Aorta (tissue), 5 donors: ENCODE measurements at regions of chr7 and their contacts with region 1.

Region 1: DNA sequence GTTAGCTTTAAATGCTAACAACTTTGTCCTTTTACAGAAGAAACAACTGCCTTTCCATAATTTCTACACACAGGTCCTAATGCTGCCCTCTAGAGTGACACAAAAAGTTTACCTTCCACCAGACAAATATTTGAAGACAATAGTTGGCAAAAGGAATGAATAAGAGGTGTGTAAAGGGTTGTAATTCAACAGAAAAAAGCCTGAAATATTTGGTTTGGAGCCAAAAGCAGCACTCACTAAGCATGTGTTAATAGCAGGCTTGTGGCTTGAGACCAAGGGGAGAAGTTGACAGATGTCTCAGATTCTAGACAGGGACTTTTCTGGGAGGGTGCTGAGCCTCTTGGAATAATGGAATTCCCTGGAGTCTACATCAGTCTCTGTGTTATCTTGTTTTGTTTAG is 156.2 kb upstream of the GALNT17 start:
- DNase-seq: no peak
- ATAC-seq: no peak
- H3K4me3 ChIP-seq: no peak overlapping the region
- H3K27ac ChIP-seq: no peak overlapping the region
- H3K4me1 ChIP-seq: no peaks in the 10 kb centered on the region
- H3K27me3 ChIP-seq: no peaks in the 10 kb centered on the region

Region 2: DNA sequence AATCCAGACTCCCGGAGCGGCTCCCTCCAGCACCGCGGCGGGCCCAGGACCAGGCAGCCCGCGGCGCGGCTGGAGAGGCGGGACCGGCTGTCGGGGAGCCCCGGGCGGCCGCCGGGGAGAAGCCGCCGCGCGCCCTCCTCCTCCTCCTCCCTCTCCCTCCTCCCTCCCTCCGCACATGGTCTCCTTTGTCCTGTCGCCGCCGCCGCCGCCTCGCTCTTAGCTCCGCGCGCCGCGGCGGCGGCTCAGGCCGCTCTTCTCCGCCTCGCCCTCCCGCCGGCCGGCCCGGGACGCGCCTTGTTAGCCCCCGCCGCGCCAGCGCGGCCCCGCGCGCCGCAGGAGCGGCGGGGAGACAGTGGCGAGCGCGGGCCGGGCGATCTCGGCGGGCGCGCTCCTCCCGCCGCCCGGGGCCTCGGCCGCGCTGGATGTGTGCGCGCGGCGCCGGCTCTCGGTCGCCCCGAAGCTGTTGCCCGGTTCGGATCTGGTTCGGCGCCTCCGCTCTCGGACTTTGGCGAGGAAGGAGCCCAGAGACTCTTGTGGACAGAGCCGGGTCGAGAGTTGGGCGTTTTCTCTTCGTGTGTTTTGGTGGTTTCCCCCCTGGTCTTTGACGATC is 281.3 kb before region 1 on chr7:
- intact Hi-C with region 1: no loop called
- DNase-seq: peak in 1 of 2 donors; percentile 55
- ATAC-seq: peak; percentile 2
- H3K4me3 ChIP-seq: peak overlapping the region; percentile 97 to 98
- H3K27ac ChIP-seq: peak overlapping the region; percentile 65 to 83
- H3K4me1 ChIP-seq: no peaks in the 10 kb centered on the region
- H3K27me3 ChIP-seq: no peaks in the 10 kb centered on the region

Region 3: GRCh38 chr7:70763961-70764691 is 211.6 kb before region 1 on chr7:
- intact Hi-C with region 1: no loop called
- DNase-seq: no peak
- ATAC-seq: no peak
- H3K4me3 ChIP-seq: no peak overlapping the region
- H3K27ac ChIP-seq: no peak overlapping the region
- H3K4me1 ChIP-seq: no peaks in the 10 kb centered on the region
- H3K27me3 ChIP-seq: no peaks in the 10 kb centered on the region

Region 4: GRCh38 chr7:70953796-70954195 is 22.0 kb before region 1 on chr7:
- intact Hi-C with region 1: loop called in 1 of 2 experiments (anchors 2 kb)
- DNase-seq: no peak
- ATAC-seq: no peak
- H3K4me3 ChIP-seq: no peak overlapping the region
- H3K27ac ChIP-seq: no peak overlapping the region
- H3K4me1 ChIP-seq: peaks cover 0 to 2% of the 10 kb centered on the region in 2 donors
- H3K27me3 ChIP-seq: no peaks in the 10 kb centered on the region

Region 5: DNA sequence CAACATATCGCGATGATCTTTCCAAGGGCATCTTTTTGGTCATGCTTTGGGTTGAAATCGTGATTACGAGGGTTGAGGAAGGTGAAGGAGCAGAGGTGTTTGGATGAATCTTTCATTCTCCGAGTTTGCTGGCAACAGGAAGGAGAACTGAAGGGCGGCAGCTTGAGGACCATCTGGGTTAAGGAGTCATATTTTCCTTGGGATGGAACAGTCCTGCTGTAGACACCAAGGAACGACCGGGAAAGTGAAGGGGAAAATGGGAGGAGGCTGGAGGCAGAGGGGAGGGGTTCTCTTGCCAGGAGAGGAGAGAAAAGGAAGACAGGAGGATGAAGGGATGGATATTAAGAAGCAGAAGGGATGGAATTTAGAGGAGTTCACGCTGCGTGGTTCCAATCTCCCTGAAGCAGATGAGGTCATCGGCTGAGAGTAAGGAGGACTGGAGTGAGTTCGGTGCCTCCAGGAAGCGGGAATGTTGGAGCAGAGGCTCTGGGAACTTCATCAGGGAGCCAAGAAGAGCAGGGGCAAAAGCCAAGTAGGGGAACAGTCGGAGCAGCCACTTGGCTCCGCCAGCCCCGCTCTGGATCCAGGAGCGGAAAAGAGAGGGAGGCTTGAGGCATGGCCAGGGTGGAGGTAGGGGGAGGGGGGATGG is 39.6 kb after region 1 on chr7:
- intact Hi-C with region 1: loop called in 1 of 2 experiments (anchors 2 kb)
- DNase-seq: peak in 1 of 2 donors; percentile 56
- ATAC-seq: peak; percentile 74
- H3K4me3 ChIP-seq: no peak overlapping the region
- H3K27ac ChIP-seq: no peak overlapping the region
- H3K4me1 ChIP-seq: no peaks in the 10 kb centered on the region
- H3K27me3 ChIP-seq: no peaks in the 10 kb centered on the region